Transverse colon (tissue), 4 donors: ENCODE measurements at regions of chr4 and their contacts with region 1.

Region 1: GRCh38 chr4:80610845-80611677 is 275.5 kb downstream of the CFAP299 start:
- DNase-seq: no peak
- H3K4me3 ChIP-seq: no peak overlapping the region
- H3K27ac ChIP-seq: peak overlapping the region; percentile 45 to 69 (median 58)
- H3K4me1 ChIP-seq: peaks cover 0 to 46% (median 30%) of the 10 kb centered on the region in 4 donors
- H3K27me3 ChIP-seq: no peaks in the 10 kb centered on the region
- CTCF ChIP-seq: no peak
- EP300 ChIP-seq: no peak
- POLR2A ChIP-seq: no peak

Region 2: DNA sequence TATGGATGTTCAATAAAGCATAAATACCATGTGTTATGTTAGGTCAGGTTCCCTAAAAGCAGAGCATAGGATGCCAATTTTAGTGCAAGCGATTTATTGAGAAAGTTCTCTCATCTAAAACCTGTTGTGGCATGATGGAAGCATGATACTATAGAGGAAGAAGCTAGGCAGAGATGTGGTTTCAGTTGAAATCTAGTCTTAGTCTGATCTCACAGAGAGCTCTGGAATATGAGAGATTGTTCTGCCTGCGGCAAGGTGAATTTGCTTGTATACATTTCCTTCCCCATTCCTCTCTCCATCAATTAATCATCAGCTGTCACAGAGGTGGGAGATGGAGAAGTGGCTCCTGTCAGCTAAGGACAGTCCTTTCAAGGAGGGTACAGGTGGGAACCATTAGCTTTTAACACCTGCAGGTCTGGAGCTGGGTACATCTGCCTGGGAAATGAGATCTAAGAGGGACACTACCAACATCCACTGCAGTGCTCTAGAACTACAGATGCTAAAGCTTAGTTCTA is 23.1 kb before region 1 on chr4:
- in situ Hi-C with region 1: no loop called
- intact Hi-C with region 1: no loop called
- DNase-seq: no peak
- H3K4me3 ChIP-seq: no peak overlapping the region
- H3K27ac ChIP-seq: no peak overlapping the region
- H3K4me1 ChIP-seq: no peaks in the 10 kb centered on the region
- H3K27me3 ChIP-seq: no peaks in the 10 kb centered on the region
- CTCF ChIP-seq: no peak
- EP300 ChIP-seq: no peak
- POLR2A ChIP-seq: no peak

Region 3: DNA sequence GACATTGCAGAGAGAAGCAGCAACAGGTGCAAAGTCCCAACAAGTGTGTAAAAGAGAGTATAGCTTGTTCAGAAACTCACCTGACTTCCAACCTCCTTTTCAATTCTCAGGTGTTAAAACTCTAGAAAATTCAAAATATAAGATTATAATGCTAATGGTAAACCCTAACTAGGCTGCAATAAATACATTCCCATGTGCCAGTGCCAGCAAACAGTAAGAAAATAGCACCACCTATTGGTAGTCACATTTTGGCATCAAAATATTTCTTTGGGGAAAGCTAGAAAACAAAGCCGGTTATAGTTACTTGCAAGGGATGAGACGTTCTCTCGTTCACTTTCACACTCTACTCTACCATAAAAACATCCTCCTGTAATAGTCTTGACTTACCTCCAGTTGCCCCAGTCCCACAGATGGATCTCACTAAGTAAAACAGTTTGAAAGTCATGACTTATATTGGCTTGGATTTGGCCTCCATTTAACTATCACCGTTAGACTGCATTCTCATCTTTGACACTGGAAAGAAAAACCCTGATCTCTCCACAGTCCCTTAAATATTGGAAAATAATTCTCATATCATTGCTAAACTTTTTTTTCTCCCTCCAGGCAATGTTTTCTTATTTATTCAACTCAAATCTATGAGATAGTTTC is 429.1 kb after region 1 on chr4:
- in situ Hi-C with region 1: loop called in 2 of 4 experiments (anchors 25 kb)
- intact Hi-C with region 1: no loop called
- DNase-seq: no peak
- H3K4me3 ChIP-seq: no peak overlapping the region
- H3K27ac ChIP-seq: peak overlapping the region in 3 of 4 donors; percentile 9 to 45 (median 37)
- H3K4me1 ChIP-seq: peaks cover 0 to 22% (median 2%) of the 10 kb centered on the region in 4 donors
- H3K27me3 ChIP-seq: no peaks in the 10 kb centered on the region
- CTCF ChIP-seq: peak; percentile 59 to 65 (median 64)
- EP300 ChIP-seq: no peak
- POLR2A ChIP-seq: no peak